ENCODE measurements at regions of chr7 and their contacts with region 1.

Region 1: GRCh38 chr7:100586266-100587025 is at the start of gene FBXO24:
- DNase-seq: peak; percentile 100
- H3K4me3 Mint-ChIP-seq: peak within 1 kb of the TSS; percentile 96
- H3K27ac Mint-ChIP-seq: peak within 1 kb of the TSS; percentile 80
- H3K4me1 Mint-ChIP-seq: peaks cover 24% of the 10 kb centered on the region
- H3K27me3 Mint-ChIP-seq: peaks cover 3% of the 10 kb centered on the region
- total RNA-seq, gene FBXO24: 0.37 and 0.91 TPM in 2 replicates

Region 2: GRCh38 chr7:100545360-100546128 is 40.9 kb before region 1 on chr7:
- intact Hi-C with region 1: loop called (anchors 1 kb)
- DNase-seq: peak; percentile 36
- H3K4me3 Mint-ChIP-seq: peak overlapping the region; percentile 76
- H3K27ac Mint-ChIP-seq: peak overlapping the region; percentile 99
- H3K4me1 Mint-ChIP-seq: peaks cover 85% of the 10 kb centered on the region
- H3K27me3 Mint-ChIP-seq: no peaks in the 10 kb centered on the region

Region 3: GRCh38 chr7:100604028-100604975 is 17.9 kb after region 1 on chr7:
- intact Hi-C with region 1: loop called (anchors 1 kb)
- DNase-seq: peak; percentile 71
- H3K4me3 Mint-ChIP-seq: peak overlapping the region; percentile 79
- H3K27ac Mint-ChIP-seq: peak overlapping the region; percentile 84
- H3K4me1 Mint-ChIP-seq: peaks cover 6% of the 10 kb centered on the region
- H3K27me3 Mint-ChIP-seq: peaks cover 3% of the 10 kb centered on the region

Region 4: GRCh38 chr7:100626530-100627237 is 40.2 kb after region 1 on chr7:
- intact Hi-C with region 1: loop called (anchors 1 kb)
- DNase-seq: peak; percentile 83
- H3K4me3 Mint-ChIP-seq: peak overlapping the region; percentile 74
- H3K27ac Mint-ChIP-seq: peak overlapping the region; percentile 42
- H3K4me1 Mint-ChIP-seq: peaks cover 35% of the 10 kb centered on the region
- H3K27me3 Mint-ChIP-seq: no peaks in the 10 kb centered on the region

Measured in activated T-helper 2 cell treated with anti-CD3 and anti-CD28 coated beads, Interferon-gamma antibody, Interleukin-2, Interleukin-4, amounts not matched to agents 10 μg/mL and 5 μg/mL and 100 μg/mL, durations not matched to agents 14 hours and 24 hours and 36 hours (primary cell).